SK-N-SH (cell line): ENCODE measurements at regions of chr3 and their contacts with region 1.

Region 1: GRCh38 chr3:146640955-146641867 is 36.1 kb upstream of the PLSCR5 start:
- DNase-seq: peak; percentile 16
- H3K4me3 ChIP-seq: no peak overlapping the region; a peak in 1 of 4 replicates
- H3K27ac ChIP-seq: no peak overlapping the region
- H3K4me1 ChIP-seq: no peaks in the 10 kb centered on the region
- H3K27me3 ChIP-seq: no peaks in the 10 kb centered on the region; the same call in 1 of the 2 replicates
- CTCF ChIP-seq: peak; percentile 69
- EP300 ChIP-seq: no peak
- RAD21 ChIP-seq: peak; percentile 69

Region 2: GRCh38 chr3:146589899-146590508 is 51.2 kb before region 1 on chr3:
- CTCF ChIA-PET with region 1: interaction called, 12 read pairs
- POLR2A ChIA-PET with region 1: no interaction called
- DNase-seq: peak; percentile 12
- H3K4me3 ChIP-seq: no peak overlapping the region; a peak in 1 of 4 replicates
- H3K27ac ChIP-seq: no peak overlapping the region
- H3K4me1 ChIP-seq: no peaks in the 10 kb centered on the region
- H3K27me3 ChIP-seq: peaks cover 7% of the 10 kb centered on the region; the same call in 1 of the 2 replicates
- CTCF ChIP-seq: peak; percentile 72
- EP300 ChIP-seq: no peak
- RAD21 ChIP-seq: peak; percentile 57

Region 3: DNA sequence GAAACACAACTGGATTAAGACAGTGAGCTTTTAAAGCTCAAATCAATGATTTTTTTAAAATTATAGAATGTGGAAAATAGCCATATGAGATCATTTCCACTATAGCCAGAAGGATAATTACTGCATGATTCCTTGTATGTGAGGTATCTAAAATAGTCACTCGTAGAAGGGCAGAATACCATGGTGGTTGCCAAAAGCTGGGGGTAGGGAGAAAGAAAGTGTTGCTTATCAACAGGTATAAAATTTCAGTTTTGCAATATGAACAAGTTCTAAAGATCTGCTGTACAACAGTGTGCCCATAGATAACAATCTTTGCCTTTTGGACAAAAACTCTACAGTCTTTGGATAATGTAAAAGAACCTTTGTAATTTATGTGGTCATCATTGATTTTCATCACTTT is 118.0 kb after region 1 on chr3:
- CTCF ChIA-PET with region 1: no interaction called
- POLR2A ChIA-PET with region 1: no interaction called
- DNase-seq: no peak
- H3K4me3 ChIP-seq: no peak overlapping the region
- H3K27ac ChIP-seq: no peak overlapping the region
- H3K4me1 ChIP-seq: no peaks in the 10 kb centered on the region
- H3K27me3 ChIP-seq: no peaks in the 10 kb centered on the region
- CTCF ChIP-seq: no peak
- EP300 ChIP-seq: no peak
- RAD21 ChIP-seq: no peak

Region 4: DNA sequence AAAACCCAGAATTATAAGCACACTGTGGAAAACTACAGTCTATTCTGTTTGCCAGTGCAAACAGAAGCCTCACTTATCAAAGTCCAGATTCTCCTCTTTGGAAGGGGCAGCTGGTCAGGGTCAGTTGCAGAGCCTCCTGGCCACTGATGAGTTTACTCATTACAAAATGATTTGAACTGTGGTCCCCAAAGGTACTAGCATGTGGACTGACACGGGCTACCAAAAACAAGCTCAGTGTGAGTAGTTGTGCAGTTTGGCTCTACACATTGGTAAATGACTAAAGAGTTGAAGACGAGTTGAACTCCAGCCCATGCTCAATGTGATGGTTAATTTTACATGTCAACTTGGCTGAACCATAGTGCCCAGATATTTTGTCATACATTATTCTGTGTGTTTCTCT is 543.6 kb after region 1 on chr3:
- CTCF ChIA-PET with region 1: no interaction called
- POLR2A ChIA-PET with region 1: no interaction called
- DNase-seq: no peak
- H3K4me3 ChIP-seq: no peak overlapping the region
- H3K27ac ChIP-seq: no peak overlapping the region
- H3K4me1 ChIP-seq: no peaks in the 10 kb centered on the region
- H3K27me3 ChIP-seq: no peaks in the 10 kb centered on the region
- CTCF ChIP-seq: no peak
- EP300 ChIP-seq: no peak
- RAD21 ChIP-seq: no peak